ENCODE measurements at regions of chr11 and their contacts with region 1.

Region 1: DNA sequence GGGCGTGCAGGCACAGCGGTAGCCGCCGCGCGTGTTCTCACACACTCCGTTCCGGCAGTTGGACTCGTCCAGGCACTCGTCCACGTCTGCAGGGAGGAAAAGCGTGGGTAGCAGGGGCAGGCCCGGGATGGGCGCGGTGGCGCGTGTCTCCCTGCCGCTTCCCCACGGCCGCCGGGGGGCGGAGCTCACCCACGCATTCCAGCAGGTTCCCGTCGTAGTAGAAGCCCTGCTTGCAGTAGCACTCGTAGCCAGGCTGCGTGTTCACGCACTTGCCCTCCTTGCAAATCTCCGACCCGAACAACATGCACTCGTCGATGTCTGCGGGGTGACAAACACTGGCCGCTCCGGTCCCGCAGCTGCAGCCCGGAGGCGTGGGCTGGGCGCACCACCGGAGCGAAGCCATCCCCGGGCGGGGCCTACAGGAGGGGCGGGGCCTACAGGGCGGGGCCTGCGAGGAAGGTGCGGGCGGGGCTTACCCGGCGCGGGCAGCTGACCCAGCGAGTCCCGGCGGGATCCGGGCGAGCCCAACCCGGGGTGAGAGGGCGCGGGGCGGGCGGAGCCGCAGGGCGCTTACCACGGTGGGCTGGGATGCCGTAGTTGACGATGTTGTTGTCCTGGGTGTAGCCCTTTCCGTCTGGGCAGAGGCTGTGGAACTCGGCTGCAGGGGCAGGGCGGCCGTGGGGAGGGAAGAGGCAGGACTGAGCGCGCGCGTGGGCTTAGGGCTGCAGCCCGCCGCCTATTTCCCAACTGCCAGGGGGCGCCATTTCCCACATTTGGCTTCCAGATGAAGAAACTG is 15.6 kb downstream of the SCYL1 start:
- DNase-seq: peak; percentile 85
- H3K4me3 Mint-ChIP-seq: peak overlapping the region; percentile 78
- H3K27ac Mint-ChIP-seq: peak overlapping the region; percentile 88
- H3K4me1 Mint-ChIP-seq: peaks cover 19% of the 10 kb centered on the region
- H3K27me3 Mint-ChIP-seq: no peaks in the 10 kb centered on the region

Region 2: GRCh38 chr11:65524741-65525545 is 15.6 kb before region 1 on chr11 and contains the start of gene SCYL1:
- CTCF ChIA-PET with region 1: interaction called, 75 read pairs
- POLR2A ChIA-PET with region 1: no interaction called
- DNase-seq: peak; percentile 78
- H3K4me3 Mint-ChIP-seq: peak within 1 kb of the TSS; percentile 81
- H3K27ac Mint-ChIP-seq: peak within 1 kb of the TSS; percentile 92
- H3K4me1 Mint-ChIP-seq: peaks cover 63% of the 10 kb centered on the region
- H3K27me3 Mint-ChIP-seq: no peaks in the 10 kb centered on the region
- total RNA-seq, gene SCYL1: 59.1 to 62.1 TPM

Region 3: DNA sequence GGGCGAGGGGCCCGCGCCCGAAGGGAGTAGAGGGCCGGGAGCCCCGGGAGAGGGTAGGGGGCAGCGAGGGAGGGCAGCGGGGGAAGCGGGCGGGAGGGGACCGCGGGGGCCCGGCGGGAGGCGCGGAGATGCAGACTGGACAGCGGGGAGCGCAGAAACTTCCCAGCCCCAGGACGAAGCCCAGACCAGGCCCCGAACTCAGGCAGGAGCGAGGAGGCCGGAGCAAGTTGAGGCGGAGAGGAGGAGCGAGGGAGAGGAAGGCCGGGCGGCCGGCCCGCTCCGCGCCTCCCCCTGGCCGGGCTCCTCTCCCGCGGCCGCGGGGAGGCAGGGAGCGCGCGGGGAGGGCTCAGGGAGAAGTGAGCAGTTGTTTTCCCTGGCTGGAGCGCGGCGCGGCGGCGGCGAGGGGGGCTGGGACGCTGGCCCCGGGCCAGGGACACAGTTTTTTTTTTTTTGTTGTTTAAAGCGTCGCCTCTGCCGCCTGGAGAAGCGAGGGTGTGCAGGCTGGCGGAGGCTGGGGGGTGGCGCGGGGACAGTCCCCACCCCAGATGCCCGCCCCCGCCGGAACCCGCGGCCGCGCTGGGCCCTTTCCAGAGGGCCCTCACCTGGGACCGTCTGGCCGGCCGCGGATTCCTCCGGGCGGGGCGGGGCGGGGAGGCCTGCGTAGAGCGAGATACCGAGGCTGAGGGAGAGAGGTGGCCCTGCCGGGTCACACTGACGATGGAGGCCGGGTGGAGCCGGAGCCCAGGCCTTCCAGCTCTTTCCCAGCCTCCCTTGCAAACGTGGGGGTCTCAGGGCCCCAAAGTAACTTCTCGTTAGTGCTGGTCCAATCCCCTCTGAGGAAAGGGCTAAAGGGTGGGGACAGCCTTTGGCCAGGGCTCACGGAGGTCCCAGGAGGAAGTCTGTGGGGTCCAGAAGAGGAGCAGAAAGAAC is 17.8 kb after region 1 on chr11 and contains the start of gene LTBP3:
- CTCF ChIA-PET with region 1: interaction called, 66 read pairs
- POLR2A ChIA-PET with region 1: no interaction called
- DNase-seq: no peak
- H3K4me3 Mint-ChIP-seq: peak within 1 kb of the TSS; percentile 76
- H3K27ac Mint-ChIP-seq: peak within 1 kb of the TSS; percentile 91
- H3K4me1 Mint-ChIP-seq: peaks cover 57% of the 10 kb centered on the region
- H3K27me3 Mint-ChIP-seq: no peaks in the 10 kb centered on the region
- total RNA-seq, gene LTBP3: 80.2 to 92.5 TPM

Region 4: DNA sequence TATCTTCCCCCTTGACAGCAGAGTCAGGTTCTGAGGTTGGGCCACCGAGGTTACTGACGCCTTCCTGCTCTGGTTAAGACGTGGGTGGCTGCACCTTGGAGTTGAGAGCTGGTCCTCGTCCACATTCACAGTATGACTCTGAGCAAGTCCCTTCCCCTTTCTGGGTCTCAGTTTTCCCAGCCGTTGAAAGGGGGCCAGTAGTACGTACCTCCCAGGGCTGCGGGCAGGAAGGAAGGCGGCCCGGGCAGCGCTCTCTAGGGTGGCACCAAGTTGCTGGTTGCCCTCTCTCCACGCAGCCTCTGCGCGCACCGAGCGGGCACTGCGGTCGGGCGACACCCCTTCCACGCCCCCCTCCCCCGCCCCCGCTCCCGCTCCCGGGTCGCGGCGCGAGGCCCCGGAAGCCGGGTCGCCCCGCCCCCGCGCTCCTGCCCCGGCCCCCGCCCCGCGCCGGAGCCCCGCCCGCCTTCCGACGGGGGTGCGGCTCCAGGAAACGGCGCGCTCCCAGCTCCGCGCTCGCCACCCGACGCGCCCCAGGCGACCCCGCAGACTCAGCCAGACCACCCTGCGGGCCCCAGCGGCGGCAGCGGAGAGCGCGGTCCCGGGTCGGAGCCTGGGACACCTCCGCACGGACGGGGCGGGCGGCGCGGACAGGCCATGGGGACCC is 35.2 kb after region 1 on chr11 and contains the start of gene EHBP1L1:
- CTCF ChIA-PET with region 1: interaction called, 57 read pairs
- POLR2A ChIA-PET with region 1: no interaction called
- DNase-seq: peak; percentile 77
- H3K4me3 Mint-ChIP-seq: peak within 1 kb of the TSS; percentile 85
- H3K27ac Mint-ChIP-seq: peak within 1 kb of the TSS; percentile 93
- H3K4me1 Mint-ChIP-seq: peaks cover 46% of the 10 kb centered on the region
- H3K27me3 Mint-ChIP-seq: no peaks in the 10 kb centered on the region
- total RNA-seq, gene EHBP1L1: 69.2 to 96.7 TPM

Region 5: DNA sequence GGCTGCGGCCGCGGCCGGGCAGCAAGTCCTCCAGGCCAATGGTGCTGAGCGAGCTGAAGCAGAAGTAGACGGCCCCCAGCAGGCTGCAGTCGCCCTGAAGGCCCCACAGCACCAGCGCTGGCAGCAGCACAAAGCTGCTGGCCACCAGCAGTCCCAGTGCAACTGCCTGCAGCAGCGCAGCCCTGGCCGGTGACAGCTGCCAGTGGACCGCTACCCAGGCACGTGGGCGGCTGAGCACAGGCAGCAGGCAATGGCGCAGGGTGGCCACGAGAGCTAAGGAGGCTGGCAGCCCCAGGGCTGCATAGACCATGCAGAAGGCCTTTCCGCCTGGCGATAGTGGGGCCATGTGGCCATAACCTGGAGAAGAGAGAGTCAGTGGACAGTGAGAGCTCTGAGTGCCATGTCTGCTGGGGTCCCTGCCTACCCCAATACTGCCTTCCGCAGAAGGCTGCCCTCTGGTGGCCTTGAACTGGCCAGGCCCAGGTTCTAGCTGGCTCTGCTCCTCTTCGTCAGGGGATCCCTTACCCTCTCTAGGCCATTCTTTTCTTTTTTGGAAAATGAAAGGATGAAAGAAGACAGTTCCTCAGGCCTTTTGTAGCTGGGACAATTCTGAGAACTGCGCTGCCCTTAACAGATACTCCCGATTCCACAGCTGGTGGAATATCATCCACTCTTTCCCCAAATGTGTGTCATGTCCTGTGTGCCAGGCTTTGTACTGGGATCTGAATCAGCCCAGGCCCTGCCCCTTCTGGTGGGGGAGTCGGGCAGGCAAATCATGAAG is 53.2 kb after region 1 on chr11:
- CTCF ChIA-PET with region 1: interaction called, 37 read pairs
- POLR2A ChIA-PET with region 1: interaction called, 3 read pairs
- DNase-seq: peak; percentile 52
- H3K4me3 Mint-ChIP-seq: no peak overlapping the region
- H3K27ac Mint-ChIP-seq: peak overlapping the region; percentile 57
- H3K4me1 Mint-ChIP-seq: peaks cover 34% of the 10 kb centered on the region
- H3K27me3 Mint-ChIP-seq: no peaks in the 10 kb centered on the region

Region 6: GRCh38 chr11:65882120-65883042 is 341.9 kb after region 1 on chr11:
- CTCF ChIA-PET with region 1: no interaction called
- POLR2A ChIA-PET with region 1: no interaction called
- DNase-seq: no peak
- H3K4me3 Mint-ChIP-seq: no peak overlapping the region
- H3K27ac Mint-ChIP-seq: peak overlapping the region; percentile 72
- H3K4me1 Mint-ChIP-seq: peaks cover 65% of the 10 kb centered on the region
- H3K27me3 Mint-ChIP-seq: no peaks in the 10 kb centered on the region